Upper lobe of right lung (tissue), 1 donor: ENCODE measurements at regions of chr2 and their contacts with region 1.

Region 1: GRCh38 chr2:120223034-120223912 is at the start of gene TMEM185B:
- DNase-seq: peak; percentile 96
- ATAC-seq: peak; percentile 98
- H3K4me3 ChIP-seq: peak within 1 kb of the TSS; percentile 77
- H3K27ac ChIP-seq: peak within 1 kb of the TSS; percentile 98
- H3K4me1 ChIP-seq: peaks cover 32% of the 10 kb centered on the region
- H3K27me3 ChIP-seq: no peaks in the 10 kb centered on the region
- CTCF ChIP-seq: no peak
- total RNA-seq, gene TMEM185B: 26.6 TPM

Region 2: DNA sequence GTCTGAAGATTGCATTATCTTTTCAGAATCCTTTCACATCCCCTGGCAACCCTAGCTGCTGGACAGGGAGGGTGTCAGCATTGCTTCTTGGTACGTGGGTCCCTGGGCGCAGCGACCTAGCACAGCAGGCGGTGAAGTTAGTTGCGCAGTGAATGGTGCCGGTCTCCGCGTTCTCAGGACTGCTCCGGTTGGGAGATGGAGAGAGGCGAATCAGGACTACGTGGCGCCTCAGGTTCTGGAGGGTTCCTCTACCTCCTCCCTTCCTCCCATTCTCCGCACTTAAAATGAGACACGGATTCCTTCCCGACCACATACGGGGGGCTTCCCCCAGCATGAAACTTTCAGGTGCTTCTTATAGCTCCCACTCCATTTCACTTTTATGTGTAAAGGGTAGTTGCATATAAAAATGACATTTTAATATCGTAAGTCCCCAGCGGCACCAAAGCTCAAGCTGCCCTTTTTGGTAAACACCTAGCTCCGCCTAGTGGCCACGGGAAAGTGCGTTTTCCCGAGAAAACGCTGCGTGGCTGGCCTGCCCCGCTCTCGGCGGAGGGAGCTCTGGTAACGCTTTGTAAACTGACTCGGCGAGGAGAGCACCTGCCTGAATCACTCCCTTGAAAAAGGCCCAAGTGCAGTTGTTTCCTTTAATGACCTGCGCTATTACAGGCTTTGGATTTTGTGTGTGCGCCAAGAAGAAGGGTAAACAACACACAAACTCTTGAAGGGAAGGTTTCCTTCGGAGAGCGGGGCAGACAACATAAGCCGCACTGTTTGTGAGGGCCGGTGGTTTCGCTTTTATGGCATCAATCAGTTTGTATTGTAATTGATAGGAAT is 89.8 kb after region 1 on chr2:
- intact Hi-C with region 1: loop called (anchors 10 kb)
- DNase-seq: peak; percentile 91
- ATAC-seq: peak; percentile 92
- H3K4me3 ChIP-seq: peak overlapping the region; percentile 52
- H3K27ac ChIP-seq: peak overlapping the region; percentile 5
- H3K4me1 ChIP-seq: peaks cover 13% of the 10 kb centered on the region
- H3K27me3 ChIP-seq: no peaks in the 10 kb centered on the region
- CTCF ChIP-seq: peak; percentile 92

Region 3: DNA sequence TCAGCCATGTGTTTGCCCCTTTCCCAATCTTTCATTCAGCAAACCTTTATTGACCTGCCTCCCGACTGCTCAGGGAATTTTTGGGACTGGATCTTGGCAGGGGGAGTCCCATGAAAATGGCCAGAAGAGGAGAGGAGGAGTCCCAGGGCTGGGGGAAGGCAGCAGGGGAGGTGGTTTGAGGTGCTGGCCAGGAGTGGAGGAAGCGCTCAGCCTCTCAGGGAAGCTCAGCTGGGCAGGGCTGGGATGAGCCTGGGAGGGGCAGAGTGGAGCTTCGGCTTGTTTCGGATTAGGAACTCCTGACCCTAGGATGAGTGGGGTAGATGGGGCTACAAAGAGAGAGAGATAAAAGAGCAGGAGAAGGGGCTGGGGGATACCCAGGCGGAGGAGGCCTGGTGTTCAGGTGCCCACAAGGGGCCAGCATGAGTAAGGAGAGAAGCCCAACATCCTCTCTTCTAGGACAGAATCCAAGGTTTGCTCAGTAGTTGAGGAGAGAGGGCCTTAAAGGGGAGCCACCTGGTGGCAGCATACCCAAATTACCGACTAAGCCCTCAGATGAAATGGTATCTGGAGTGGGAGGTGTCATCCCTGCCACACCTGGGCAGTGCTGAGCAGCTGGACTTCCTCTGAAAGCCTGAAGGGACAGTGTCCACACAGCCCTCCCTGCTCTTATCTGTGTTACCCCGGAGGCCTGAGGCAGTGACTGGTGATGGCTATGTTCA is 213.8 kb after region 1 on chr2:
- intact Hi-C with region 1: no loop called
- DNase-seq: no peak
- ATAC-seq: peak; percentile 11
- H3K4me3 ChIP-seq: no peak overlapping the region
- H3K27ac ChIP-seq: no peak overlapping the region
- H3K4me1 ChIP-seq: no peaks in the 10 kb centered on the region
- H3K27me3 ChIP-seq: peaks cover 12% of the 10 kb centered on the region
- CTCF ChIP-seq: peak; percentile 36

Region 4: GRCh38 chr2:121184248-121184862 is 961.1 kb after region 1 on chr2:
- intact Hi-C with region 1: no loop called
- DNase-seq: no peak
- ATAC-seq: no peak
- H3K4me3 ChIP-seq: no peak overlapping the region
- H3K27ac ChIP-seq: no peak overlapping the region
- H3K4me1 ChIP-seq: no peaks in the 10 kb centered on the region
- H3K27me3 ChIP-seq: no peaks in the 10 kb centered on the region
- CTCF ChIP-seq: no peak